ENCODE measurements at regions of chr4 and their contacts with region 1.

Region 1: DNA sequence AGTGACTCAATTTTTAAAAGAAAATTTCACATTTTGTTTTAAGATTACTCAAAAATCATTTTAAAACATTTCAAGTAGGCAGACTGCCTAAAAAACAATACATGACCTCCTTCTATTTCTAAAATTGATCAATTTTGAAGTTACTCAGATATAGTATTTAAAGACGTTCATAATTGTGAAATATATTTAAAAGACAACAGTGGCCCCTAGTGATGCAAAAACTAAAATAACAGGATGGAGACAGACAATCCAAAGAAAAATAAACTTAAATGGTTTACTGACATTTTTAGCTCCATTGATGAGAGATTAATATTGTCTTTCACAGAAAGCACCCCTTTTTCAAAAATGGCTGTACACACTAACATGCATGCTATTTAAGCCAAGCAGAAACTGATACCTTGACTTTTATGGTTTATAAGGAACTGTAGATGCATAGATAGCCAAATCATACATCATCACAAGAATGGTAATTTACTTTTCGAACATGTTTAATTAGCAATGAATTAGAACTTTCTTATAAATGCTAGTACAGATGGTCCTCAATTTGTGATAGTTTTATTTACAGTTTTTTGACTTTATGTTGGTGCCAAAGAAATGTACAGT is 69.8 kb upstream of the FAT4 start:
- DNase-seq: no peak
- ATAC-seq: no peak
- H3K4me3 ChIP-seq: no peak overlapping the region
- H3K27ac ChIP-seq: no peak overlapping the region
- H3K4me1 ChIP-seq: no peaks in the 10 kb centered on the region
- H3K27me3 ChIP-seq: no peaks in the 10 kb centered on the region
- CTCF ChIP-seq: peak in 6 of 7 experiments; percentile 24 to 55 (median 50)
- POLR2A ChIP-seq: no peak

Region 2: DNA sequence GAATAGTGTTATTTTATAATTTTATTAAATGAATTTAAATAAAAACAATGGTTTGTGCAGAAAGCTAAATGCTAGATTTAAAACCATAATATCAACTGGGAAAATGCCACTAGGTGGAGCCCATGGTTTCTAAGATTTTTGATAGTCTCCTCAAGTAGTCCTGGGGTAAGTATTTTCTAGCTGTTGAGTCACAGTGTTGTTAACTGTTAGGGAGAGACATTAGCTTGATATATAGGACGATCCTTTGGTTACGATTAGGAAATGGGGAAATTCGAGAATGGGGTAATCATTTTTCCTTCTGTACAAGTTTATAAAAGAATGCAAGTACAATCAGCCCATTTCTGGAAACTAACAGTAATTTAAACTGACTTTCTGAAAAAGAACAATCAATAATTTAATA is 910.8 kb before region 1 on chr4:
- intact Hi-C with region 1: loop called (anchors 10 kb)
- DNase-seq: peak in 3 of 4 donors; percentile 35 to 53 (median 40)
- ATAC-seq: peak; percentile 48
- H3K4me3 ChIP-seq: no peak overlapping the region
- H3K27ac ChIP-seq: no peak overlapping the region
- H3K4me1 ChIP-seq: no peaks in the 10 kb centered on the region
- H3K27me3 ChIP-seq: no peaks in the 10 kb centered on the region
- CTCF ChIP-seq: peak; percentile 22 to 68 (median 64)
- POLR2A ChIP-seq: no peak

Region 3: GRCh38 chr4:124738994-124739393 is 506.0 kb before region 1 on chr4:
- intact Hi-C with region 1: no loop called
- DNase-seq: no peak
- ATAC-seq: no peak
- H3K4me3 ChIP-seq: no peak overlapping the region
- H3K27ac ChIP-seq: no peak overlapping the region
- H3K4me1 ChIP-seq: no peaks in the 10 kb centered on the region
- H3K27me3 ChIP-seq: no peaks in the 10 kb centered on the region
- CTCF ChIP-seq: no peak
- POLR2A ChIP-seq: no peak